Caco-2 (cell line): ENCODE measurements at regions of chr9 and their contacts with region 1.

Region 1: GRCh38 chr9:2809691-2810433 is 34.0 kb downstream of the PUM3 start:
- DNase-seq: peak; percentile 78 to 79
- H3K4me3 ChIP-seq: no peak overlapping the region
- H3K4me3 Mint-ChIP-seq: peak overlapping the region; percentile 48
- H3K27ac Mint-ChIP-seq: peak overlapping the region; percentile 75
- H3K4me1 ChIP-seq: peaks cover 50% of the 10 kb centered on the region
- H3K4me1 Mint-ChIP-seq: peaks cover 8% of the 10 kb centered on the region
- H3K27me3 ChIP-seq: no peaks in the 10 kb centered on the region
- H3K27me3 Mint-ChIP-seq: no peaks in the 10 kb centered on the region
- CTCF ChIP-seq: no peak

Region 2: DNA sequence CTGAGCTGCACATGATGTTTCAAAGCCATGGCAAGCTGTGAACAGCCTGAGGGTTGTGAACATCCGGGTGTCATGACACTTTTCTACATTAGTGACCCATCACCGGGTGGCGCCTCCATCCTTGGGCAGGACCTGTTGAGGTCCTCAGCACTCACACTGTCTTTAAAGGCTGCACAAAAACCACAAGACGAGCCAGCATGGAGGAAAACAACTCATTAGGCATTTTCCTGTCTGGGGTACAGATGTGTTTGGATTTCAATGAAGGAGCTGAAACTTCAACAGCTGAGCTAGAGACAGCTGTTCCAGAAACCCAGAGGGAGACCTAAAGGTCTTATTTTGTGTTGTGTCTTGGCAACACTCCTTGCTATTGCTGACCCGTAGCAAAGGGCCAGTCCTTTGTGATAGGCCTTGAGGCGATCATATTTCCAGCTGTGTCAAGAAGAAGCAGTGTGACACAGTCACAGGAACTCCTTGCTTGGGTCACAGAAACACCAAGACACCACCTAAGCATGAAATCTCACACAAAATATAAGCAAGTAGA is 340.1 kb before region 1 on chr9:
- CTCF ChIA-PET with region 1: no interaction called
- POLR2A ChIA-PET with region 1: no interaction called
- intact Hi-C with region 1: loop called (anchors 10 kb)
- DNase-seq: peak; percentile 50 to 57
- H3K4me3 ChIP-seq: no peak overlapping the region
- H3K4me3 Mint-ChIP-seq: no peak overlapping the region
- H3K27ac Mint-ChIP-seq: no peak overlapping the region
- H3K4me1 ChIP-seq: peaks cover 14% of the 10 kb centered on the region
- H3K4me1 Mint-ChIP-seq: peaks cover 6% of the 10 kb centered on the region
- H3K27me3 ChIP-seq: no peaks in the 10 kb centered on the region
- H3K27me3 Mint-ChIP-seq: no peaks in the 10 kb centered on the region
- CTCF ChIP-seq: peak; percentile 17 to 32

Region 3: GRCh38 chr9:2480255-2480837 is 329.5 kb before region 1 on chr9:
- CTCF ChIA-PET with region 1: no interaction called
- POLR2A ChIA-PET with region 1: no interaction called
- intact Hi-C with region 1: no loop called
- DNase-seq: no peak
- H3K4me3 ChIP-seq: no peak overlapping the region
- H3K4me3 Mint-ChIP-seq: no peak overlapping the region
- H3K27ac Mint-ChIP-seq: no peak overlapping the region
- H3K4me1 ChIP-seq: 0 out of 2 replicates have a peak, but pooled peaks cover 6% of the 10 kb centered on the region
- H3K4me1 Mint-ChIP-seq: no peaks in the 10 kb centered on the region
- H3K27me3 ChIP-seq: no peaks in the 10 kb centered on the region
- H3K27me3 Mint-ChIP-seq: no peaks in the 10 kb centered on the region
- CTCF ChIP-seq: no peak

Region 4: GRCh38 chr9:2771662-2772061 is 38.2 kb before region 1 on chr9:
- CTCF ChIA-PET with region 1: no interaction called
- POLR2A ChIA-PET with region 1: no interaction called
- intact Hi-C with region 1: loop called (anchors 2 kb)
- DNase-seq: peak in 1 of 2 experiments; percentile 11
- H3K4me3 ChIP-seq: no peak overlapping the region
- H3K4me3 Mint-ChIP-seq: peak overlapping the region; percentile 30
- H3K27ac Mint-ChIP-seq: peak overlapping the region; percentile 51
- H3K4me1 ChIP-seq: peaks cover 28% of the 10 kb centered on the region
- H3K4me1 Mint-ChIP-seq: peaks cover 28% of the 10 kb centered on the region
- H3K27me3 ChIP-seq: no peaks in the 10 kb centered on the region
- H3K27me3 Mint-ChIP-seq: no peaks in the 10 kb centered on the region
- CTCF ChIP-seq: no peak

Region 5: GRCh38 chr9:2837915-2838314 is 28.1 kb after region 1 on chr9:
- CTCF ChIA-PET with region 1: no interaction called
- POLR2A ChIA-PET with region 1: interaction called, 10 read pairs
- intact Hi-C with region 1: no loop called
- DNase-seq: no peak
- H3K4me3 ChIP-seq: no peak overlapping the region
- H3K4me3 Mint-ChIP-seq: no peak overlapping the region
- H3K27ac Mint-ChIP-seq: no peak overlapping the region
- H3K4me1 ChIP-seq: peaks cover 8% of the 10 kb centered on the region
- H3K4me1 Mint-ChIP-seq: peaks cover 7% of the 10 kb centered on the region
- H3K27me3 ChIP-seq: no peaks in the 10 kb centered on the region
- H3K27me3 Mint-ChIP-seq: no peaks in the 10 kb centered on the region
- CTCF ChIP-seq: no peak